Activated CD8-positive, alpha-beta T cell treated with anti-CD3 and anti-CD28 coated beads, Interleukin-2, amount 10 ng/mL, durations not matched to agents 7 days and 5 days (primary cell): ENCODE measurements at regions of chr10 and their contacts with region 1.

Region 1: GRCh38 chr10:47340608-47341170 is 7.5 kb upstream of the RBP3 start:
- DNase-seq: peak; percentile 76
- ATAC-seq: peak; percentile 49
- H3K4me3 Mint-ChIP-seq: no peak overlapping the region
- H3K27ac Mint-ChIP-seq: no peak overlapping the region
- H3K4me1 Mint-ChIP-seq: no peaks in the 10 kb centered on the region
- H3K27me3 Mint-ChIP-seq: no peaks in the 10 kb centered on the region

Region 2: DNA sequence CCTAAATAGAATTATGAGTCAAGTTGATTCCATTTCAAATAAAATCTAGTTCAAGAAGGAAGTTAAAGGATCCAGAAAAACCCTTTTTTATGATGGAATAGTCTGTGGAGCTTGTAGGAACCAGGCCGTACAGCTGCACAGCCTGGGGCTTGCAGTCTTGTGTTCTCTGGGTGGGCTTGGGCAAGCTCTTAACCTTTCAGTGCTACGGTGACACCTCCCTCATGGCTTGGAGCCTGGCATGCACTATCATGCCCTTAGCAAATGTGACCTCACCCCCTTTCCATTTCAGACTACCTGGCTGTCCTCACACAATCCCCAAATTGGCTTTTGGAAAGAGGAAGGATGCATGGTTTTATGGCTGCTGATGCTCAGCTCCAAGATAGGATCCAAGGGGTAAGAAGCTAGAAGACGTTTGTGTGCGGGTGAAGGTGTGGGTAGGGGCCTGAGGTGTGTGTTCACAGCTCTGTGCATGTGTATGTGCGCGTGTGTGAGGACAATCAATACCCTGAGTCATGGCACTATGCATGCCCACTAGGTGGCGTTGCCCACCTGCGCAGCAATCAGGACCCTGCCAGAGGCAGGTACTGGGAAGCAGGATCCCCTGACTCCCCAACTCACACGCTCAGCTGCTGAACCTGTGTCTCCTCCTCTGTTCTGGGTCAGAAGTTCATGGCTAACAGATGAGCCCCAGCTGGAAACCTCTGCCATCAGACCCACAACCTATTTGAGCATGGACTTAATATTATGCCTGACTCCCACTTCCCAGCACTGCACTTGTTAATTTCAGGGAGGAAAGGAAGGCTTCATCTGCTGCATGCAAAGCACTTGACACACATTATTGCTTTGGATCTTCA is 316.1 kb before region 1 on chr10:
- CTCF ChIA-PET with region 1: interaction called, 14 read pairs
- POLR2A ChIA-PET with region 1: no interaction called
- DNase-seq: peak; percentile 76
- ATAC-seq: peak; percentile 86
- H3K4me3 Mint-ChIP-seq: no peak overlapping the region
- H3K27ac Mint-ChIP-seq: no peak overlapping the region
- H3K4me1 Mint-ChIP-seq: no peaks in the 10 kb centered on the region
- H3K27me3 Mint-ChIP-seq: no peaks in the 10 kb centered on the region

Region 3: GRCh38 chr10:47287365-47287802 is 53.3 kb before region 1 on chr10:
- CTCF ChIA-PET with region 1: no interaction called
- POLR2A ChIA-PET with region 1: no interaction called
- DNase-seq: no peak
- ATAC-seq: no peak
- H3K4me3 Mint-ChIP-seq: no peak overlapping the region
- H3K27ac Mint-ChIP-seq: no peak overlapping the region
- H3K4me1 Mint-ChIP-seq: peaks cover 29% of the 10 kb centered on the region
- H3K27me3 Mint-ChIP-seq: no peaks in the 10 kb centered on the region

Region 4: GRCh38 chr10:47374611-47375536 is 34.2 kb after region 1 on chr10:
- CTCF ChIA-PET with region 1: no interaction called
- POLR2A ChIA-PET with region 1: no interaction called
- DNase-seq: no peak
- ATAC-seq: no peak
- H3K4me3 Mint-ChIP-seq: no peak overlapping the region
- H3K27ac Mint-ChIP-seq: no peak overlapping the region
- H3K4me1 Mint-ChIP-seq: peaks cover 8% of the 10 kb centered on the region
- H3K27me3 Mint-ChIP-seq: peaks cover 19% of the 10 kb centered on the region